ENCODE measurements at regions of chr9 and their contacts with region 1.

Region 1: GRCh38 chr9:126704873-126705766 is 91.4 kb downstream of the LMX1B start:
- DNase-seq: peak; percentile 88
- ATAC-seq: peak; percentile 71
- H3K4me3 Mint-ChIP-seq: no peak overlapping the region
- H3K27ac Mint-ChIP-seq: no peak overlapping the region
- H3K4me1 Mint-ChIP-seq: peaks cover 14% of the 10 kb centered on the region
- H3K27me3 Mint-ChIP-seq: peaks cover 35% of the 10 kb centered on the region

Region 2: DNA sequence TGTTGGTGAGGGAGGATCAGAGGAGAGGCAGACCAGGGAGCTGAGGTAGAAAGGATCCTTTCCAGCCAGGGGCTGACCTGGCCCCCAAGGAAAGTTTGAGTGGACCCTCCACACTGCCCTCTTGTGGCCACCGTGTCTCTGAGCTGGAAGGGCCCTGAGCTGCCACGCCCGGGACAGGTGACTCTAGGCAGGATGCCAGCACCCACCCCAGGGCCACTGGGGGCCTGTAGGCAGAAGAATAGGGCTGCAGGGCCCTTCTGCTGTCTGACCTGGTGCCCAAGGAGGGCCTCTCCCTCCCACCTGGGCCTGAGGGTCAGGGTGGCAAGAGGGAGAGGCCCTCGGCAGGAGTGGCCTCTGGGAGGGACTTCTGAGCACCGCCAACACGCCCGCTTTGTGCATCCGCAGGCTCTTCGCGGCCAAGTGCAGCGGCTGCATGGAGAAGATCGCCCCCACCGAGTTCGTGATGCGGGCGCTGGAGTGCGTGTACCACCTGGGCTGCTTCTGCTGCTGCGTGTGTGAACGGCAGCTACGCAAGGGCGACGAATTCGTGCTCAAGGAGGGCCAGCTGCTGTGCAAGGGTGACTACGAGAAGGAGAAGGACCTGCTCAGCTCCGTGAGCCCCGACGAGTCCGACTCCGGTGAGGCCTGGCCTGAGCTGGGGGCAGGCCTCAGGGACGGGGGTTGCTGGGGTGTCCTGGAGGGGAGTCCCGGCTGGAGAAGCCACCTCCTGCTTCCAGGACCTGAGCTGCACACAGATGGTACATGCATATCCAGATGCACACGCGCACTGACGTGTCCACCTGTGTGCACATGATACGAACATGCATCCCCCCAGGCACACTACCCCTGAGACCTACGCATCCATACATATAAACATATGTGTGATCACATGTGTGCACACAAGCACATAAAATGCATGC is 14.4 kb before region 1 on chr9:
- CTCF ChIA-PET with region 1: interaction called, 31 read pairs
- DNase-seq: peak; percentile 71
- ATAC-seq: peak; percentile 79
- H3K4me3 Mint-ChIP-seq: no peak overlapping the region
- H3K27ac Mint-ChIP-seq: no peak overlapping the region
- H3K4me1 Mint-ChIP-seq: no peaks in the 10 kb centered on the region
- H3K27me3 Mint-ChIP-seq: peaks cover 21% of the 10 kb centered on the region

Region 3: GRCh38 chr9:126722252-126723078 is 17.3 kb after region 1 on chr9:
- CTCF ChIA-PET with region 1: interaction called, 74 read pairs
- DNase-seq: peak; percentile 91
- ATAC-seq: peak; percentile 70
- H3K4me3 Mint-ChIP-seq: peak overlapping the region; percentile 78
- H3K27ac Mint-ChIP-seq: peak overlapping the region; percentile 94
- H3K4me1 Mint-ChIP-seq: peaks cover 40% of the 10 kb centered on the region
- H3K27me3 Mint-ChIP-seq: peaks cover 14% of the 10 kb centered on the region

Region 4: GRCh38 chr9:126745574-126746411 is 40.7 kb after region 1 on chr9:
- CTCF ChIA-PET with region 1: interaction called, 102 read pairs
- DNase-seq: peak; percentile 46
- ATAC-seq: peak; percentile 74
- H3K4me3 Mint-ChIP-seq: no peak overlapping the region
- H3K27ac Mint-ChIP-seq: peak overlapping the region; percentile 16
- H3K4me1 Mint-ChIP-seq: peaks cover 30% of the 10 kb centered on the region
- H3K27me3 Mint-ChIP-seq: peaks cover 24% of the 10 kb centered on the region

Region 5: GRCh38 chr9:126791406-126792151 is 86.5 kb after region 1 on chr9:
- CTCF ChIA-PET with region 1: interaction called, 609 read pairs
- DNase-seq: no peak
- ATAC-seq: no peak
- H3K4me3 Mint-ChIP-seq: no peak overlapping the region
- H3K27ac Mint-ChIP-seq: no peak overlapping the region
- H3K4me1 Mint-ChIP-seq: peaks cover 10% of the 10 kb centered on the region
- H3K27me3 Mint-ChIP-seq: peaks cover 64% of the 10 kb centered on the region

Measured in activated CD8-positive, alpha-beta memory T cell treated with anti-CD3 and anti-CD28 coated beads, Interleukin-2, amount 10 ng/mL, durations not matched to agents 7 days and 5 days (primary cell).